GM12878 (cell line): ENCODE measurements at regions of chr6 and their contacts with region 1.

Region 1: DNA sequence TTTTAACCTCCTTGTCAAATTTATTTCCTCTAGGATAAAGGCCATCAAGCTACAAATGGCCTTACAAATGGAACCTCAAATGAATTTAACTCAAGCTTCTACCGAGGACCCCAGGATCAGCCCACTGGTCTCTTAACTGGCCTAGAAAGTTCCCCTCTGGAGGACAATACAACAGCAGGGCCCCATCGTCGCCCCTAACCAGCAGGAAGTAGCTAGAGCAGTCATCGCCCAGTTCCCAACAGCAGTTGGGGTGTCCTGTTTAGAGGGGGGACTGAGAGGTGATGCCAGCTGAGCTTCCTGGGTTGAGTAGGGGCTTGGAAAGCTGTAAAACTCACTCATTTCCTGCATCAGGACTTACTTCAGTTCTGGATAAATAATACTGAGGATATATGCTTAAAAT is 25.6 kb downstream of the CEP85L start:
- DNase-seq: no peak
- ATAC-seq: no peak
- H3K4me3 ChIP-seq: no peak overlapping the region
- H3K27ac ChIP-seq: no peak overlapping the region
- H3K4me1 ChIP-seq: no peaks in the 10 kb centered on the region
- H3K27me3 ChIP-seq: no peaks in the 10 kb centered on the region
- CTCF ChIP-seq: no peak
- EP300 ChIP-seq: no peak
- POLR2A ChIP-seq: no peak
- RAD21 ChIP-seq: no peak

Region 2: DNA sequence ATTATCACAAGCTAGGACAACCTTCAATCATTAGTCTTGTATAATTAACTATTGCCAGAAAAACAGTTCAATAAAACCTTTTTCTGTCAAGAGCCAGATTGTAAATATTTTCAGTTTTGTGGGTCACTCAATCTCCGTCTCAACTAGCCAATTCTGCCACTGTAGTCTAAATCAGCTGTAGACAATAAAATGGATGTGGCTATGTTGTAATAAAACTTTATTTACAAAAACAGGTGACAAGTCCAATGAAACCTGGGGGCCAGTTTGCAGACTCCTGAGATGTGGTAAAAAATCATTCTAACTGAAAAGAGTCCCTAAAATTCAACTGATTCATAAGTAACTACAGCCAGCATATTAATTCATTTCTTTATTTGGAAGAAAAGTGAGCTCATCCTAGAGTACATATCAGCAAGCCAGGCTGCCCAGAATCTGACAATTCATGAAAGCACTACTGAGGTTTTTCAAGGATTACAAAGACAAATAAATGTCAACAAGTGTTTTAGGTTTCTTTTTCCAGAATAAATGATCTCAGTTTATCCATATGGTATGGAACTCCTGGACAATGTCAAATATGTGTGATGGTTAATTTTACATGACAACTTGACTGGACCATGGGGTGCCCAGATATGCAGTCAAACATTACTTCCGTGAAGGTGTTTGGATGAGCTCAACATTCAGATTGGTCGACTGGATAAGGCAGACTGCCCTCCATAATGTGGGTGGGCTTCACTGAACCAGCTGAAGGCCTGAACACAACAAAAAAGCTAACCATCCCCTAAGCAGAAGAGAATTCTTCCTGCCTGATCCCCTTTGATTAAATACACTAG is 10.3 kb after region 1 on chr6:
- CTCF ChIA-PET with region 1: interaction called, 7 read pairs
- POLR2A ChIA-PET with region 1: no interaction called
- RAD21 ChIA-PET with region 1: no interaction called
- SMC1A ChIA-PET with region 1: interaction called, 12 read pairs
- in situ Hi-C with region 1: no loop called
- intact Hi-C with region 1: no loop called
- DNase-seq: no peak
- ATAC-seq: no peak
- H3K4me3 ChIP-seq: no peak overlapping the region
- H3K27ac ChIP-seq: no peak overlapping the region
- H3K4me1 ChIP-seq: peaks cover 5% of the 10 kb centered on the region; the same call in 1 of the 2 replicates
- H3K27me3 ChIP-seq: no peaks in the 10 kb centered on the region
- CTCF ChIP-seq: no peak
- EP300 ChIP-seq: no peak
- POLR2A ChIP-seq: no peak
- RAD21 ChIP-seq: no peak